Heart right ventricle (tissue), 16 donors: ENCODE measurements at regions of chr2 and their contacts with region 1.

Region 1: GRCh38 chr2:177263451-177264208 is 897 bp downstream of the NFE2L2 start:
- DNase-seq: peak; percentile 99
- ATAC-seq: peak; percentile 72 to 86 (median 80)
- H3K4me3 ChIP-seq: peak overlapping the region; percentile 79 to 97 (median 94)
- H3K27ac ChIP-seq: peak overlapping the region; percentile 96 to 100 (median 100)
- H3K4me1 ChIP-seq: peaks cover 3 to 55% (median 50%) of the 10 kb centered on the region in 9 donors
- H3K27me3 ChIP-seq: no peaks in the 10 kb centered on the region
- CTCF ChIP-seq: peak; percentile 76 to 98 (median 92)

Region 2: GRCh38 chr2:177212106-177212890 is 51.3 kb before region 1 on chr2 and contains the start of gene HNRNPA3:
- intact Hi-C with region 1: loop called in 9 of 10 experiments (anchors 1 to 5 kb)
- DNase-seq: peak; percentile 99 to 100
- ATAC-seq: peak; percentile 95 to 97 (median 96)
- H3K4me3 ChIP-seq: peak within 1 kb of the TSS; percentile 69 to 96 (median 86)
- H3K27ac ChIP-seq: peak within 1 kb of the TSS; percentile 93 to 100 (median 99)
- H3K4me1 ChIP-seq: peaks cover 8 to 53% (median 48%) of the 10 kb centered on the region in 9 donors
- H3K27me3 ChIP-seq: no peaks in the 10 kb centered on the region
- CTCF ChIP-seq: peak in 7 of 9 donors; percentile 16 to 60 (median 29)
- total RNA-seq, gene HNRNPA3: 63.7 to 93.8 (median 77.6) TPM

Region 3: DNA sequence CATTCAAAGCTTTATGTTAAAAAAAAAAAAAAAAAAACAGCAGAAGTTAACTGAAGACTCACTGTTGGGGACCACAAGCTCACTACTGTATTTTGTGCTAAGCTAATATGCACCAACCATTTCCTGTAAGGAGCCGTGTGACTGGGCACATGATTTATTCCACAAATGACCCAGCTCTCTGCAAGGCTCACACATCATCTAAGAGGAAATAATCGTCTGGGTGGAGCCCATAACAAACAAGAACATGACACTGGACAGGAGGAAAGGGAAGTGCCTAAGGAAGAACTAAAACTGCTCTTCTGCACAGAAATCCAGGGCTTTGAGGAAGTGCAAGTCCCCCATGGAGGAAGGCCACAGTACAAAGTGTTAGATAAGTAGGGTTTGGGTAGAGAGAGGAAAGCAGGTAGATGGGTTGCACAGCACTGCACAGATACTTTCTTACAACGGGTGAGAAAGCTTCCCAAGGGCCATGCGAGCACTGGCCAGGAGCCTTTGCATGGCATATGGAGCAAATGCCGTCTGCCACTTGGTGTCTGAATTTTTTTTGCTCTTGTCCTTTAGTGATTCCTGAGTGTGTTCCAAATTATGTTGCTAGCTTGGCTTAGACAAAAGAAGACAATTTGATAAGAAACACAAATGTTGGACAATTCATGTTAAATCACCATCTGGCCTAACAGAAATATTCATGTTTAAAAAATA is 23.5 kb before region 1 on chr2:
- intact Hi-C with region 1: loop called in 3 of 10 experiments (anchors 2 kb)
- DNase-seq: peak in 1 of 2 donors; percentile 49
- ATAC-seq: peak; percentile 24 to 83 (median 68)
- H3K4me3 ChIP-seq: peak overlapping the region in 2 of 10 donors; percentile 11 to 20
- H3K27ac ChIP-seq: peak overlapping the region in 9 of 10 donors; percentile 61 to 90 (median 80)
- H3K4me1 ChIP-seq: peaks cover 12 to 100% (median 98%) of the 10 kb centered on the region in 9 donors
- H3K27me3 ChIP-seq: no peaks in the 10 kb centered on the region
- CTCF ChIP-seq: no peak

Region 4: GRCh38 chr2:177296040-177296439 is 32.4 kb after region 1 on chr2:
- intact Hi-C with region 1: loop called in 2 of 10 experiments (anchors 2 kb)
- DNase-seq: no peak
- ATAC-seq: peak in 5 of 8 donors; percentile 38 to 74 (median 54)
- H3K4me3 ChIP-seq: peak overlapping the region in 1 of 10 donors; percentile 12
- H3K27ac ChIP-seq: peak overlapping the region in 6 of 10 donors; percentile 5 to 63 (median 52)
- H3K4me1 ChIP-seq: peaks cover 0 to 14% (median 8%) of the 10 kb centered on the region in 9 donors
- H3K27me3 ChIP-seq: no peaks in the 10 kb centered on the region
- CTCF ChIP-seq: peak in 8 of 9 donors; percentile 11 to 63 (median 52)

Region 5: GRCh38 chr2:177325270-177325929 is 61.8 kb after region 1 on chr2:
- intact Hi-C with region 1: loop called in 4 of 10 experiments (anchors 5 to 10 kb)
- DNase-seq: no peak
- ATAC-seq: no peak
- H3K4me3 ChIP-seq: no peak overlapping the region
- H3K27ac ChIP-seq: no peak overlapping the region
- H3K4me1 ChIP-seq: peaks cover 0 to 13% (median 0%) of the 10 kb centered on the region in 9 donors
- H3K27me3 ChIP-seq: no peaks in the 10 kb centered on the region
- CTCF ChIP-seq: no peak

Region 6: DNA sequence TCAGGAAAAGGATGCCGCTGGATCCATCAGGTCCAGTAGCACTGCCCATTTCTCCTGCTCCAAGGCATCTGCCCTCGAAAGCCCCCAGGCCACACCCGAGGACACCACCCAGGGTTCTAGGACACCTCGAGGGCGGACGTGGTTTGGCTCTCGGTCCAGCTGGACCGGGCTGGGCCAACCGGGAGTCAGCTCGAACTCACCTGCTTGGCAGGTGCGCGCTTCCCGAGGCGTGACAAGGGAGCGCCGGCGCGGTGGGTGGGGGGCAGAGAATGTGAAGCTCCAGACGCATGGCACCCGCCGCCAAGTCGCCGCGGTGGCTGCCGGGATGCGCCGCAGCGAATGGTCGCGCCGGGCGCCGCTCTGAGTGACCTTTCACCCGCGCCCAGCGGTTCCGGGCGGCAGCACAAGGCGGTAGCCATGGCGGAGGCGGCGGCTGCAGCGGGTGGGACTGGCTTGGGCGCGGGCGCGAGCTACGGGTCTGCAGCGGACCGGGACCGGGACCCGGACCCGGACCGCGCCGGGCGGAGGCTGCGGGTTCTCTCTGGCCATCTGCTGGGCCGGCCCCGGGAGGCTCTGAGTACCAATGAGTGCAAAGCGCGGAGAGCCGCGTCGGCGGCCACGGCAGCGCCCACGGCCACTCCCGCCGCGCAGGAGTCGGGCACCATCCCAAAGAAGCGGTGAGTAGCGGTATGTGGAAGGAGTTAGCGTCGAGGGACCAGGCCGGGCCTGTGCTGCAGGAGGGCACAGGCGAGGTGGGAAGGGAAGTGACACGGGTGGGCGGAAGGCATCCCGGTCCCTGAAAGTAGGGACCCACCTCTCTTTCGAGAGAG is 129.0 kb after region 1 on chr2 and contains the start of gene AGPS:
- intact Hi-C with region 1: loop called in 1 of 10 experiments (anchors 10 kb)
- DNase-seq: peak; percentile 71 to 84
- ATAC-seq: peak; percentile 93 to 98 (median 96)
- H3K4me3 ChIP-seq: peak within 1 kb of the TSS; percentile 80 to 99 (median 91)
- H3K27ac ChIP-seq: peak within 1 kb of the TSS; percentile 19 to 93 (median 84)
- H3K4me1 ChIP-seq: peaks cover 0 to 60% (median 39%) of the 10 kb centered on the region in 9 donors
- H3K27me3 ChIP-seq: no peaks in the 10 kb centered on the region
- CTCF ChIP-seq: peak in 4 of 9 donors; percentile 22 to 34 (median 27)
- total RNA-seq, gene AGPS: 23.1 to 32.0 (median 28.9) TPM